A549 (cell line): ENCODE measurements at regions of chr3 and their contacts with region 1.

Region 1: GRCh38 chr3:14921078-14921616 is 26.2 kb upstream of the NR2C2 start:
- DNase-seq: peak; percentile 75 to 81
- ATAC-seq: peak; percentile 84 to 88
- H3K4me3 ChIP-seq: no peak overlapping the region
- H3K27ac ChIP-seq: no peak overlapping the region
- H3K4me1 ChIP-seq: no peaks in the 10 kb centered on the region
- CTCF ChIP-seq: peak; percentile 95
- EP300 ChIP-seq: no peak
- POLR2A ChIP-seq: no peak
- RAD21 ChIP-seq: peak; percentile 97

Region 2: DNA sequence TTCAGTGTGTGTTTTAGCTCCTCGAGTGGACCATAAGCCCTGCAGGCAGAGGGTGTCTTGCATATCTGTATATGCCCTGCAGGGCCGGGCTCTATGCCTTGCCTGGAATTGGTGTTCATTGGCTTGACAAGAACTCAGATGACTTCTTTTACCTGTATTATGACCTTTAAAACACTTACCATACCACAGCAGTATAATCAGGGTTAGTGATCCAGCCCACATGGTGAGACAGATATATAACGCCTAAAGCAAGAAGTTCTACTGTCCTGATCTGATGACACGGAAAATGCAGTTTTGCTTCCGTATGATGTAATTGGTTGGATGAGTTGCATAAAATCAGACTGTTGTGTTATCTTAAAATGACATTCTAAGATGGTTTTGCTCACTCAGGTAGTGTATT is 260.2 kb before region 1 on chr3:
- CTCF ChIA-PET with region 1: interaction called, 15 read pairs
- POLR2A ChIA-PET with region 1: no interaction called
- DNase-seq: no peak
- ATAC-seq: no peak
- H3K4me3 ChIP-seq: no peak overlapping the region
- H3K27ac ChIP-seq: no peak overlapping the region
- H3K4me1 ChIP-seq: no peaks in the 10 kb centered on the region
- CTCF ChIP-seq: no peak
- EP300 ChIP-seq: no peak
- POLR2A ChIP-seq: no peak
- RAD21 ChIP-seq: no peak

Region 3: DNA sequence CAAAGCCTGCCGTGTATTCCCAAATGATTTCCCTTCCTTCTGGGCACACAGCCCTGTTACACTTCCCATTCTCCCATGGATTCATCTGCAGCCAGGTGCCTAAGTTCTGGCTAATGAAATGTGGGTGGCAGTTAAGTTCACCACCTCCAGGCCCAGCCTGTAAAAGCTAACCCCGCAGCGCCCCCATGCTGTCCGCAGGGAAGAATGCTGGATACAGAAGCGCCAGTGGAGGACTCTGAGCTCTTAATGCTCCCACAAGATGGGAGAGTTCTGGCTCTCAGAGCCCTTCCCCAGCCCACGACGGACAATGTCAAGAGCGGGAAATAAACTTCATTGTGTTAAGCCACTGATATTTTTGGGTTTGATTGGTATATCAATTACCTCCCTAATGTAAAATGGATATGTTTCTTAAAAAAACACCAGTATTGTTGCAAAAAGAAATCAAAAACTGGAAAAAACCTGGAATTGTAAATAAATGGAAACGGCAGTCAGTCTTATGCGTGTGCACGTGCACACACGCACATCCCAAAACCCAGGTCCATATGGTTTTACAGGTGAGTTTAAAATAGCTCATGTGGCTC is 140.1 kb before region 1 on chr3:
- CTCF ChIA-PET with region 1: interaction called, 10 read pairs
- POLR2A ChIA-PET with region 1: no interaction called
- DNase-seq: peak; percentile 65 to 77
- ATAC-seq: peak; percentile 95 to 99
- H3K4me3 ChIP-seq: no peak overlapping the region
- H3K27ac ChIP-seq: no peak overlapping the region
- H3K4me1 ChIP-seq: no peaks in the 10 kb centered on the region
- CTCF ChIP-seq: peak; percentile 60
- EP300 ChIP-seq: no peak
- POLR2A ChIP-seq: no peak
- RAD21 ChIP-seq: peak; percentile 67 to 82

Region 4: DNA sequence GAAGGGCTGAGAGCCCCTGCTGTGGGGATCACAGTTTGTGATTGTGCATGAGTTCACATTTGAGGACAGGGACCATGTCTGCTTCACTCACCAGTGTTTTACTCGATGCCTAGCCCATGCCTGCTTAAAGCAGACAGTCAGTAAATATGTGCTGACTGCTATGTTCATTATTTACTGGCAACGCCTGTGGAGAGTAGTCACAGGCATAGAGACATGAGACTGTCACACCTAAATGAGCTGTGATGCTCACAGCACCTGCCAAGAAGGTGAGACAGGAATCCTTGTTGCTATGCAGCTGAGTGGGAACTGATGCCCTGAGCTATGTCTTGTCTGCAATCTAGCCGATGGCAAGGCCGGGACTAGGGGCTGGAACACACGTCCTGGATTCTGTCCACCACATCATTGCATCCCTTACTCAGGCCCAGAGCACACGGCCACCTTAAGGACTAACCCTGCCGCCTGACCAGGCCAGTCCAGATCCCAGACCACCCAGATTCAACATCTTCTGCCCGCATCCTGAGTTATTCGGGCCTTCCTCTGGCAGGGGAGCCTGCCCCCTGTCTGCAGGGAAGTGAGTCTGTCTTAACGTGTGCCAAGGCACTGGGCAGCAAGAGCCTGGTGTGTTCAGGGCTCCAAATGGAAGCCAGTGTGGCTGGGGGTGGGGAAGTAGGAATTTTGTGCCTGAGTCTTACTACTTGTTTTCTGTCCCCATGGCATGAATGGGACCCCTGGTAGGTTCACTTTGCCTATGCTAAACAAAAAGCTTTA is 57.6 kb before region 1 on chr3:
- CTCF ChIA-PET with region 1: interaction called, 20 read pairs
- POLR2A ChIA-PET with region 1: no interaction called
- DNase-seq: no peak
- ATAC-seq: peak; percentile 45 to 69; a peak in 3 of 6 replicates
- H3K4me3 ChIP-seq: no peak overlapping the region
- H3K27ac ChIP-seq: no peak overlapping the region
- H3K4me1 ChIP-seq: no peaks in the 10 kb centered on the region
- CTCF ChIP-seq: no peak
- EP300 ChIP-seq: no peak
- POLR2A ChIP-seq: no peak
- RAD21 ChIP-seq: no peak

Region 5: GRCh38 chr3:14902719-14903118 is 18.4 kb before region 1 on chr3:
- CTCF ChIA-PET with region 1: interaction called, 38 read pairs
- POLR2A ChIA-PET with region 1: no interaction called
- DNase-seq: no peak
- ATAC-seq: peak in 1 of 2 experiments; percentile 44; a peak in 2 of 6 replicates
- H3K4me3 ChIP-seq: no peak overlapping the region
- H3K27ac ChIP-seq: no peak overlapping the region
- H3K4me1 ChIP-seq: no peaks in the 10 kb centered on the region
- CTCF ChIP-seq: no peak
- EP300 ChIP-seq: no peak
- POLR2A ChIP-seq: no peak
- RAD21 ChIP-seq: no peak

Region 6: GRCh38 chr3:15108082-15108545 is 187.0 kb after region 1 on chr3:
- CTCF ChIA-PET with region 1: interaction called, 14 read pairs
- POLR2A ChIA-PET with region 1: no interaction called
- DNase-seq: peak; percentile 83 to 96
- ATAC-seq: peak; percentile 92 to 98
- H3K4me3 ChIP-seq: no peak overlapping the region
- H3K27ac ChIP-seq: no peak overlapping the region
- H3K4me1 ChIP-seq: no peaks in the 10 kb centered on the region
- CTCF ChIP-seq: peak; percentile 88
- EP300 ChIP-seq: no peak
- POLR2A ChIP-seq: no peak
- RAD21 ChIP-seq: peak; percentile 84